Gastrocnemius medialis (tissue), 4 donors: ENCODE measurements at regions of chr1 and their contacts with region 1.

Region 1: GRCh38 chr1:31038360-31038759 is 27.2 kb downstream of the PUM1 start:
- DNase-seq: no peak
- ATAC-seq: peak; percentile 80 to 88
- H3K4me3 ChIP-seq: no peak overlapping the region
- H3K27ac ChIP-seq: peak overlapping the region; percentile 53 to 75 (median 70)
- H3K4me1 ChIP-seq: peaks cover 65 to 68% of the 10 kb centered on the region in 2 donors
- H3K27me3 ChIP-seq: no peaks in the 10 kb centered on the region
- CTCF ChIP-seq: no peak
- POLR2A ChIP-seq: no peak

Region 2: DNA sequence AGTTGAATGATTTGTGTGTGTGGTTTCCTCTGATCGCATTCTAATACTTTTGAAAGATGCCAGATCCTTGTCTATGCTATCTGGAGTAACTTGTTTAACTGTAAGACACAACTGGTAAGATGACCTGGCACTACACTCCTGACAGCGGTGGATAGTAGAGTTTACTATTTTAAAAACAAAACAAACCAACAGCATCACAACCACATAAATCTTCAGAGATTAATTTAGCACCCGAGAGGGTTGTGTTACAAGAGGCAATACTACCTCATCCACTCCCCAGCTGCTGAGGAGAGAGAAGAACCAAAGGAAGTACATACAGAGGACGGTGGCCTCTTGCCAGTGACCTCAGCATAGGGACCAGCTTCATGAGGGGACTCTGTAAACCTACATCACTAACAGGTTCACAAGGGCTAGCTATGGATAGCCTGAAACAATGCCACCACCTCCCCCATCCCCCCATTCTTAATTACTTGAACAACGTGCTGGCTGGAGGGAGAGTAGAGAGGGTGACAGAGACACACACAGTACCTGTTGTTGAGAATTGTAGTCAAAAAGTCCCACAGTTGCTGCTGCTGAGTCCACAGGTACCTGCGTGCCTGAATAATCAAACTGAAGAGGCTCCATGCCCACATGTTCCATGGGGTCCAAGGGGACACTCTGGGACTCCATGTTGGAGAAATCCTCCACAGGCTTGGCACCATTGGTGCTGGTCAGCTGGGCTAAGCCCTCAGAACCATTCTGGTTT is 46.3 kb before region 1 on chr1:
- in situ Hi-C with region 1: no loop called
- intact Hi-C with region 1: loop called (anchors 5 kb)
- DNase-seq: peak; percentile 18 to 35
- ATAC-seq: peak; percentile 77 to 89
- H3K4me3 ChIP-seq: no peak overlapping the region
- H3K27ac ChIP-seq: peak overlapping the region; percentile 58 to 79 (median 66)
- H3K4me1 ChIP-seq: peaks cover 69 to 71% of the 10 kb centered on the region in 2 donors
- H3K27me3 ChIP-seq: no peaks in the 10 kb centered on the region
- CTCF ChIP-seq: no peak
- POLR2A ChIP-seq: no peak

Region 3: GRCh38 chr1:31010086-31010989 is 28.0 kb before region 1 on chr1:
- in situ Hi-C with region 1: no loop called
- intact Hi-C with region 1: no loop called
- DNase-seq: no peak
- ATAC-seq: peak in 1 of 2 donors; percentile 30
- H3K4me3 ChIP-seq: no peak overlapping the region
- H3K27ac ChIP-seq: peak overlapping the region in 3 of 4 donors; percentile 6 to 42 (median 10)
- H3K4me1 ChIP-seq: peaks cover 73 to 82% of the 10 kb centered on the region in 2 donors
- H3K27me3 ChIP-seq: no peaks in the 10 kb centered on the region
- CTCF ChIP-seq: no peak
- POLR2A ChIP-seq: no peak